ENCODE measurements at regions of chr2 and their contacts with region 1.

Region 1: DNA sequence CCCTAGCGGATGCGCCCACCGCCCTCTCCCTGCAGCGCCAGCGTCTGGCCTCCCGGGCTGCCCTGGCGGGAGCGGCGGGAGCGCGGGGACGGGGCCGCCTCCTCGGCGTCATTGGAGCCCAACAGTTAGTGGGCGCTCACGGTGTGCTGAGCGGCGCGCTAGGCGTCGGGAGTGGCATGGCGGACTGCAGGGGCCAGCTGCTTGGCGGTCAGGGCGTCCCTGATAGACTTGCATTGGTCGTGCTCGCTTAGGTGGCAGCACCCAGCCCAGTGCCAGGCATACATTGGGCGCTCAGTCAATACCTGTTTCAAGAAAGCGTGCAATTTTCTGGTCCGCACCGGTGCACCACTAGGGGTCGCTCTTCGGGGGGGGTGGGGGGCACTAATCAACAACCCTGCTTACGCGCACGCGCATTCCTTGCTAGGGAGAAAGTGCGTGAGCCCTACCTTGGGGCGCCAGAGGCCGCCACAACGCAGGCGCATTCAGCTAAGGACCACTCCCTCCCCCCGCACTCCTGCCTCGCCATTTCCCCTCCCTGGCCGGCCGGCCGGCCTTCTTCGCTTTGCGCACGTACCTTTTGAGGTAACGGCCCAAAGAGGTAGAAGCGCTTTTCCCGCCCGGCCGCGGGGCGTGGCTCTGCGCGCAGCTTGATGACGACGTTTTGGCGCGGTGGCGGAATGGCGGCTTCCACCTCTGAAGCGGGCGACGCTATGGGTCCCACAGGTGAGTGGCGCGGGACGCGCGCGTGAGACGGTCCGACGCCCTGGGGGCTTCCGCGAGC is 411 bp upstream of the MZT2A start:
- DNase-seq: peak; percentile 97
- ATAC-seq: peak; percentile 82
- H3K4me3 Mint-ChIP-seq: peak overlapping the region; percentile 96
- H3K27ac Mint-ChIP-seq: peak overlapping the region; percentile 98
- H3K4me1 Mint-ChIP-seq: peaks cover 48% of the 10 kb centered on the region
- H3K27me3 Mint-ChIP-seq: no peaks in the 10 kb centered on the region

Region 2: DNA sequence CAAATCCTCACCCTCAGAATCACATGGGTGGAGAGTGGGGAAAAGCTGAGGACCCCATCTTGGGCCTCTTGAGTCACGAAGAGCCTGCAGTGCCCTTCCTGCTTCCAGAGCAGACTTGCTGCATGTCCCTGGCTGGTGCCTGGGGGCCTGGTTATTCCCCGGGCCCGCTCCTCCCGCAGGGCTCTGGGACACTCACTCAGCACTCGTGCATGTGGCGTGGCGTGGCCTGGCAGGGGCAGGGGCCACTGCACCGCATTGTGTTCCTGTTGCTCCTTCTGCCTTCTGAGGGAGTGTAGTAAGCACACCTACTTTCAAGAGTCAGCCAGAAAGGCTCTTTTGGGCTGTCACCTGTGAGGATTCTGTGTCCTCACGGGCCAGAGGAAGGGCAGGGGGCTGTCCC is 17.0 kb after region 1 on chr2:
- CTCF ChIA-PET with region 1: interaction called, 25 read pairs
- DNase-seq: no peak
- ATAC-seq: no peak
- H3K4me3 Mint-ChIP-seq: no peak overlapping the region
- H3K27ac Mint-ChIP-seq: no peak overlapping the region
- H3K4me1 Mint-ChIP-seq: peaks cover 17% of the 10 kb centered on the region
- H3K27me3 Mint-ChIP-seq: no peaks in the 10 kb centered on the region

Measured in activated CD8-positive, alpha-beta memory T cell treated with anti-CD3 and anti-CD28 coated beads, Interleukin-2, amount 10 ng/mL, durations not matched to agents 7 days and 5 days (primary cell).